ENCODE measurements at regions of chr22 and their contacts with region 1.

Region 1: GRCh38 chr22:22753526-22754267 is 109.3 kb downstream of the GGTLC2 start:
- DNase-seq: peak; percentile 79
- H3K4me3 ChIP-seq: peak overlapping the region in 1 of 2 experiments; percentile 35; a peak in 1 of 4 replicates
- H3K27ac ChIP-seq: no peak overlapping the region
- H3K4me1 ChIP-seq: no peaks in the 10 kb centered on the region
- H3K27me3 ChIP-seq: 0 out of 2 replicates have a peak, but pooled peaks cover 4% of the 10 kb centered on the region
- CTCF ChIP-seq: peak; percentile 60
- EP300 ChIP-seq: no peak
- RAD21 ChIP-seq: peak; percentile 63

Region 2: DNA sequence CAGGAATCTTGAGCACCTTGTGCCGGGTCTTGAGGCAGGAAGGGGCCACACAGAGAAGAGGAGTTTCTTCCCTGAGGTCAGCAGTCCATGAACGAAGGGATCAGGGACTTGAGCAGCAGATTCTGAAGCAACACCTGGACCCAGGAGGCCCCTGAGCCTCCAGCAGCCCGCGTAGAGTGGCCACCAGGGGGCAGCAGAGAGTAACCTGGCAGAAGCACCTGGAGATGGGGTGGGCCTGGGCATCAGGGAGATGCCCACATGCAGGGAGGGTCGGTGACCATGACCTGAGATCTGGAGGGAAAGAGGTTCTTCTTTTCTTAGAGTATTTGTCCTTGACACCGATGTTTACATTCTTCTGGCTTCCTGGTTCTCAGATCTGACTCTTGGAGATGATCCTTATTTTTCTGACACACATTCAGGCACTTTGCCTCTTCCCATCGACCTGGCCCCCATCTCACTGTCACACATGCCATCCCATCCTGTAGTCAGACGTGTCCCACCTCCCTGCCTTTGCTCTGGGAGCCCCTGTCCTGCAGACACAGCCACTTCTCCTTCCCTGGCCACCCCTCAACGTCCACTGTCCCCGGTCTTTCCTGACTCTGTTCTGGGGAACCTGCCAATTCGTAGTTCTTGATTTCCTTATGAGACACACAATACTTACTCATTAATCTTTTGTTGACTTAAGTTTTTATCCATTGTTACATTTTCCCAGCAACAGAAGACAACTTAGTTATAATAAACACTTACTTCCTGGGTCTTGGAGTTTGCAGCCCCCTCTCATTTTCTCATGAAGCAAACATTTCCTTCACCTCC is 42.8 kb before region 1 on chr22:
- CTCF ChIA-PET with region 1: interaction called, 10 read pairs
- POLR2A ChIA-PET with region 1: no interaction called
- DNase-seq: peak; percentile 75
- H3K4me3 ChIP-seq: peak overlapping the region in 1 of 2 experiments; percentile 9; a peak in 1 of 4 replicates
- H3K27ac ChIP-seq: no peak overlapping the region
- H3K4me1 ChIP-seq: no peaks in the 10 kb centered on the region
- H3K27me3 ChIP-seq: no peaks in the 10 kb centered on the region; the same call in 1 of the 2 replicates
- CTCF ChIP-seq: peak; percentile 91
- EP300 ChIP-seq: no peak
- RAD21 ChIP-seq: peak; percentile 36

Region 3: DNA sequence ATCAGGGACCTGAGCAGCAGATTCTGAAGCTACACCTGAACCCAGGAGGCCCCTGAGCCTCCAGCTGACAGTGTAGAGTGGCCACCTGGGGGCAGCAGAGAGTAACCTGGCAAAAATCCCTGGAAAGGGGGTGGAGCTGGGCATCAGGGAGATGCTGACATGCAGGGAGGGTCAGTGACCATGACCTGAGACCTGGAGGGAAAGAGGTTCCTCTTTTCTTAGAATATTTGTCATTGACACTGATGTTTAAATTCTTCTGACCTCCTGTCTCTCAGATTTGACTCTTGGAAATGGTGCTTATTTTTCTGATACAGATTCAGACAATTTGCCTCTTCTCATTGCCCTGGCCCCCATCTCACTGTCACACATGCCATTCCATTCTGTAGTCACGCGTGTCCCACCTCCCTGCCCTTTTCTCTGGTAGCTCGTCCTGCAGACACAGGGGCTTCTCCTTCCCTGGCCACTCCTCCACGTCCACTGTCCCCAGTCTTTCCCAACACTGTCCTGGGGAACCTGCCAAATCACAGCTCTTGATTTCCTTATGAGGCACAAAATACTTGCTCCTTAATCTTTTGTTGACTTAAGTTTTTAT is 16.7 kb after region 1 on chr22:
- CTCF ChIA-PET with region 1: interaction called, 37 read pairs
- POLR2A ChIA-PET with region 1: no interaction called
- DNase-seq: peak; percentile 66
- H3K4me3 ChIP-seq: no peak overlapping the region; a peak in 1 of 4 replicates
- H3K27ac ChIP-seq: no peak overlapping the region
- H3K4me1 ChIP-seq: no peaks in the 10 kb centered on the region; a peak in 1 of 4 replicates
- H3K27me3 ChIP-seq: no peaks in the 10 kb centered on the region; the same call in 1 of the 2 replicates
- CTCF ChIP-seq: peak; percentile 73
- EP300 ChIP-seq: no peak
- RAD21 ChIP-seq: no peak

Region 4: GRCh38 chr22:22968366-22968765 is 214.7 kb after region 1 on chr22:
- CTCF ChIA-PET with region 1: no interaction called
- POLR2A ChIA-PET with region 1: no interaction called
- DNase-seq: no peak
- H3K4me3 ChIP-seq: no peak overlapping the region
- H3K27ac ChIP-seq: no peak overlapping the region
- H3K4me1 ChIP-seq: no peaks in the 10 kb centered on the region
- H3K27me3 ChIP-seq: no peaks in the 10 kb centered on the region
- CTCF ChIP-seq: no peak
- EP300 ChIP-seq: no peak
- RAD21 ChIP-seq: no peak